ENCODE measurements at regions of chr1 and their contacts with region 1.

Region 1: GRCh38 chr1:246210796-246211195 is 296.3 kb downstream of the SMYD3 start:
- DNase-seq: no peak
- ATAC-seq: no peak
- H3K4me3 Mint-ChIP-seq: no peak overlapping the region
- H3K27ac Mint-ChIP-seq: no peak overlapping the region
- H3K4me1 Mint-ChIP-seq: no peaks in the 10 kb centered on the region
- H3K27me3 Mint-ChIP-seq: no peaks in the 10 kb centered on the region

Region 2: GRCh38 chr1:246226041-246226440 is 15.2 kb after region 1 on chr1:
- CTCF ChIA-PET with region 1: no interaction called
- POLR2A ChIA-PET with region 1: no interaction called
- intact Hi-C with region 1: loop called in 1 of 2 experiments (anchors 1 kb)
- DNase-seq: no peak
- ATAC-seq: no peak
- H3K4me3 Mint-ChIP-seq: no peak overlapping the region
- H3K27ac Mint-ChIP-seq: no peak overlapping the region
- H3K4me1 Mint-ChIP-seq: no peaks in the 10 kb centered on the region
- H3K27me3 Mint-ChIP-seq: no peaks in the 10 kb centered on the region

Region 3: DNA sequence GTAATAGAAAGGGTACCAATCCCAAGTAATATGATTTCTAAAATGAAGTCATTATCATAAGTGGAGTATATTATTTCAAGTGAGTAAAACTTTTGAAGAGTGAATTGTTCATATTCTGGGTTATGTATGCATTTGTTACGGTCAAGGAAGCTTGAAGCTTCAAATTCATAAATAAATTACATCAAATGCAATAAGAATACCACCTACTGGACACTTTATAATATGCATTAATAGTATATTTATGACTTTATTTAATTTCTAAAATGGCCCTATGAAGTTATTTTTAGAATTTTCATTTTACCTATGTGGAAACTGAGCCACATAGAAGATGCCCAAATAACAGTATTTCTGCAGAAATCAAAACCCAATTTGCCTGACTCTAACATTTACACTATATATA is 35.6 kb after region 1 on chr1:
- CTCF ChIA-PET with region 1: no interaction called
- POLR2A ChIA-PET with region 1: no interaction called
- intact Hi-C with region 1: no loop called
- DNase-seq: no peak
- ATAC-seq: no peak
- H3K4me3 Mint-ChIP-seq: no peak overlapping the region
- H3K27ac Mint-ChIP-seq: no peak overlapping the region
- H3K4me1 Mint-ChIP-seq: no peaks in the 10 kb centered on the region
- H3K27me3 Mint-ChIP-seq: no peaks in the 10 kb centered on the region

Region 4: DNA sequence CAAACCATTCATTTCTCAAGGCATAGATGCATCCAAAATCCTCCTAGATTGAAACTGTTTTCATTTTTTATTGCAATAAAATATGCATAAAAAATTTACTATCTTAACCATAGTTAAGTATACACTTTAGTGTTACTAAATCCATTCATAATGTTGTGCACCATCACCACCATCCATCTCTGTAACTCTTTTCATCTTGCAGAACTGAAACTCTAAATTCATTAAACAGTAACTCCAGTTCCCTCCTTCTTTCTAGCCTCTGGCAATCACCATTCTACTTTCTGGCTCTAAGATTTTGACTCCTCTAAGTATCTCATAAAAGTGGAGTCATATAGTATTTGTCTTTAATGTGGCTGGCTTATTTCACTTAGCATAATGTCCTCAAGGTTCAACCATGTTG is 59.4 kb after region 1 on chr1:
- CTCF ChIA-PET with region 1: no interaction called
- POLR2A ChIA-PET with region 1: no interaction called
- intact Hi-C with region 1: no loop called
- DNase-seq: no peak
- ATAC-seq: no peak
- H3K4me3 Mint-ChIP-seq: no peak overlapping the region
- H3K27ac Mint-ChIP-seq: no peak overlapping the region
- H3K4me1 Mint-ChIP-seq: no peaks in the 10 kb centered on the region
- H3K27me3 Mint-ChIP-seq: no peaks in the 10 kb centered on the region